Activated CD4-positive, alpha-beta T cell treated with anti-CD3 and anti-CD28 coated beads for 36 hours (primary cell): ENCODE measurements at regions of chr2 and their contacts with region 1.

Region 1: DNA sequence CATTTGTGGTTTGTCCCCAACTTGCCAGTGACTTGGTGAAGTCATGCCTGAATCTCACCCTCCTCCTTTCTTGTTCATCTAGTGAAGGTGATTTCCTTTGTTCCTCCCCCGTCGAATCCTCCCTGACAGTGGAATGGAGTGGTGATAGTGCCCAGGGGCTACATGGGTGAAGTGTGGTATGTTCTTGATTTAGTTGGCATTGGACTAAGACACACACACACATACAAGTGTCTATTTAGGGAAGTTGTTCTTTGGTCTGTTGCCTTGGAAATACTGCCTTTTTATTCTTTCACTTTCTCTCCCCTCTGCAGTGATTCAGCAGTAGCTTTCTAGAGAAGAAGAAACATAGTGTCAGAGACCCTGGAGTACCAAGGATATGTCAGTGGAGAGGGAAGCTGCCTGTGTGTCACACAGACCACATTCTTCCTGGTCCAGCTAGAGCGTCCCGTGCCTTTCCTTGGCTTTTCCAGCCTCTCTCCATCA is 10.9 kb downstream of the INPP4A start:
- DNase-seq: peak; percentile 59
- ATAC-seq: peak; percentile 51
- H3K4me3 Mint-ChIP-seq: peak overlapping the region; percentile 55
- H3K27ac Mint-ChIP-seq: peak overlapping the region; percentile 88
- H3K4me1 Mint-ChIP-seq: peaks cover 96% of the 10 kb centered on the region
- H3K27me3 Mint-ChIP-seq: no peaks in the 10 kb centered on the region

Region 2: GRCh38 chr2:98394595-98395153 is 60.9 kb before region 1 on chr2:
- CTCF ChIA-PET with region 1: no interaction called
- POLR2A ChIA-PET with region 1: no interaction called
- intact Hi-C with region 1: no loop called
- DNase-seq: no peak
- ATAC-seq: no peak
- H3K4me3 Mint-ChIP-seq: no peak overlapping the region
- H3K27ac Mint-ChIP-seq: no peak overlapping the region
- H3K4me1 Mint-ChIP-seq: no peaks in the 10 kb centered on the region
- H3K27me3 Mint-ChIP-seq: peaks cover 14% of the 10 kb centered on the region

Region 3: GRCh38 chr2:98438190-98439133 is 17.1 kb before region 1 on chr2:
- CTCF ChIA-PET with region 1: interaction called, 3 read pairs
- POLR2A ChIA-PET with region 1: no interaction called
- intact Hi-C with region 1: loop called (anchors 1 to 2 kb)
- DNase-seq: no peak
- ATAC-seq: peak; percentile 95
- H3K4me3 Mint-ChIP-seq: no peak overlapping the region
- H3K27ac Mint-ChIP-seq: peak overlapping the region; percentile 71
- H3K4me1 Mint-ChIP-seq: peaks cover 21% of the 10 kb centered on the region
- H3K27me3 Mint-ChIP-seq: no peaks in the 10 kb centered on the region

Region 4: DNA sequence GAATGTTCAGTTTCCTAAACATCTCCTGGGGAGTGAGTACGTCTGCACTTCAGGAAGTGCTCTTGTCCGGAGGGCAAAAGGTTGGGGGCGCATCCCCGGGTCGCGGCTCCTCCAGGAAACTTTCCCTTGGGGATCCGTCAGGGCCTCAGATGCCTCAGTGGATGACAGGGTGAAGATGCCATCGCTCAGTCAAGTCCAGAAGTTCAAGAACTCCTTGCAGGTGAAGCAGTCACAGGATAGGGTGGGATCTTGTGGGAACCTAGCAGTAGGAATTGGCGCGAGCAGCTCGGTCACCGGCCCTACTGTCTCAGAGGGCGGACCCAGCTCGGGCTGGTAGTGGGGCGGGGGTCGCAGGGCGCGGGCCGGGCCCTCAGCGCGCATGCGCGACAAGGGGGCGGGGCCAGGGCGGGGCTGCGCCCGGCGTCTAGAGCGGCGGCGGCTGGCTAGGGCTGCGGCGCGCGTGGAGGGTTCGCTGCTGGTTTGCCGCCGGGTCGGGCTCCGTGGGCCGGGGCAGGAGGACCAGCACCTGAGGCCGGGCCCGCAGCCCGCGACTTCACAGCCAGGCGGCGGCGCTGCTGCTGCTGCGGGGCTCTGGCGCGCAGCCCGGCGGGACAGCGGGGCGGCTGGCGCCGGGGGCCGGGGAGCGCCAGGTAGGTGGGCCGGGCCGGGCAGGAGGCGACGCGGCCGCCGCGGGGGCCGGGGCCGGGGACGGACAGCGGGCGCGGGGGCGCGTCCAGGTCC is 10.9 kb before region 1 on chr2 and contains the start of gene INPP4A:
- CTCF ChIA-PET with region 1: interaction called, 31 read pairs
- POLR2A ChIA-PET with region 1: interaction called, 5 read pairs
- intact Hi-C with region 1: loop called in 1 of 2 experiments (anchors 1 kb)
- DNase-seq: peak; percentile 87
- ATAC-seq: peak; percentile 74
- H3K4me3 Mint-ChIP-seq: peak within 1 kb of the TSS; percentile 83
- H3K27ac Mint-ChIP-seq: peak within 1 kb of the TSS; percentile 94
- H3K4me1 Mint-ChIP-seq: peaks cover 42% of the 10 kb centered on the region
- H3K27me3 Mint-ChIP-seq: no peaks in the 10 kb centered on the region
- total RNA-seq, gene INPP4A: 29.1 to 33.0 TPM

Region 5: DNA sequence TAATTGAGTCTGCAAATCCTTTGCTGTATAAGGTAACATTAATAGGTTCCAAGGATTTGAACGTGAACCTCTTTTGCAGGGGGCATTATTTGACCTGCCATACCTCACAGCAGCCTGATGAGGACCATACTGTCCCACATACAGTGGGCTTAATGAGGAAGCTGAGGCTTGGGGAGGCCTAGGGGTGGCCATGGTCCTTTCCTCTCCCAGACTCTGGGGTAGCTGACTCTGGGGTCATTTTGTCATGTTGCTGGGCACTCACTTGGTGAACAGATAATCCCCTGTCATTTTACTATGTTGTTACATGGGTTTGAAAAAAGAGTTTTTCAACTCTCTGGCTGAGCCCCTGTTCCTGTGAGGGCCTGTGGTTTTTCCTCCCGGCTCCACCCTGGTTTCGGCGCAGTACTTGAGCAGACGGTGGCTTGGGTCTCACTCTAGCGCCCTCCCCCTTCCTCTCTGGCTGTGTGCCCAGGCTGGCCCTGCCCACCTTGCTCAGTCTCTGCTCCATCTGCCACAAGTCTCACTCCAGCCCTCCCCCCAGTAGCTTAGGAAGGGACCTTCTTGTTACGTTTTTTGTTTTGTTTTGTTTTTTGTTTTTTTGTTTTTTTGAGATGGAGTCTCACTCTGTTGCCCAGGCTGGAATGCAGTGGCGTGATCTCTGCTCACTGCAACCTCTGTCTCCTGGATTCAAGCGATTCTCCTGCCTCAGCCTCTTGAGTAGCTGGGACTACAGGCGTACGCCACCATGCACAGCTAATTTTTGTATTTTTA is 10.1 kb after region 1 on chr2:
- CTCF ChIA-PET with region 1: interaction called, 13 read pairs
- POLR2A ChIA-PET with region 1: interaction called, 7 read pairs
- intact Hi-C with region 1: loop called (anchors 1 to 2 kb)
- DNase-seq: peak; percentile 78
- ATAC-seq: peak; percentile 16
- H3K4me3 Mint-ChIP-seq: peak overlapping the region; percentile 69
- H3K27ac Mint-ChIP-seq: peak overlapping the region; percentile 96
- H3K4me1 Mint-ChIP-seq: peaks cover 90% of the 10 kb centered on the region
- H3K27me3 Mint-ChIP-seq: no peaks in the 10 kb centered on the region

Region 6: GRCh38 chr2:98608116-98608999 is 152.8 kb after region 1 on chr2 and contains the starts of genes COA5 and UNC50:
- CTCF ChIA-PET with region 1: no interaction called
- POLR2A ChIA-PET with region 1: no interaction called
- intact Hi-C with region 1: loop called in 1 of 2 experiments (anchors 5 kb)
- DNase-seq: peak; percentile 95
- ATAC-seq: peak; percentile 91
- H3K4me3 Mint-ChIP-seq: peak within 1 kb of the TSS; percentile 83
- H3K27ac Mint-ChIP-seq: peak within 1 kb of the TSS; percentile 94
- H3K4me1 Mint-ChIP-seq: peaks cover 61% of the 10 kb centered on the region
- H3K27me3 Mint-ChIP-seq: no peaks in the 10 kb centered on the region
- total RNA-seq, gene COA5: 17.7 to 33.2 TPM
- total RNA-seq, gene UNC50: 21.1 to 31.4 TPM

Region 7: GRCh38 chr2:98757904-98758421 is 302.4 kb after region 1 on chr2:
- CTCF ChIA-PET with region 1: no interaction called
- POLR2A ChIA-PET with region 1: no interaction called
- intact Hi-C with region 1: loop called (anchors 5 to 10 kb)
- DNase-seq: peak; percentile 68
- ATAC-seq: peak; percentile 54
- H3K4me3 Mint-ChIP-seq: peak overlapping the region; percentile 57
- H3K27ac Mint-ChIP-seq: peak overlapping the region; percentile 95
- H3K4me1 Mint-ChIP-seq: peaks cover 49% of the 10 kb centered on the region
- H3K27me3 Mint-ChIP-seq: no peaks in the 10 kb centered on the region

Region 8: GRCh38 chr2:99154643-99155536 is 699.4 kb after region 1 on chr2 and contains the starts of genes LIPT1 and TSGA10:
- CTCF ChIA-PET with region 1: interaction called, 3 read pairs
- POLR2A ChIA-PET with region 1: no interaction called
- intact Hi-C with region 1: loop called in 1 of 2 experiments (anchors 10 kb)
- DNase-seq: peak; percentile 96
- ATAC-seq: peak; percentile 94
- H3K4me3 Mint-ChIP-seq: no peak within 1 kb of the TSS
- H3K27ac Mint-ChIP-seq: peak within 1 kb of the TSS; percentile 93
- H3K4me1 Mint-ChIP-seq: peaks cover 36% of the 10 kb centered on the region
- H3K27me3 Mint-ChIP-seq: no peaks in the 10 kb centered on the region
- total RNA-seq, gene LIPT1: 4.6 to 4.7 TPM
- total RNA-seq, gene TSGA10: 6.4 to 9.4 TPM